Psoas muscle (tissue), 8 donors: ENCODE measurements at regions of chr22 and their contacts with region 1.

Region 1: GRCh38 chr22:45268958-45269844 is 15.5 kb upstream of the UPK3A start:
- DNase-seq: peak; percentile 85 to 95
- ATAC-seq: peak; percentile 79 to 87 (median 83)
- H3K4me3 ChIP-seq: peak overlapping the region; percentile 74
- H3K27ac ChIP-seq: peak overlapping the region; percentile 68
- H3K4me1 ChIP-seq: peaks cover 31% of the 10 kb centered on the region
- H3K27me3 ChIP-seq: no peaks in the 10 kb centered on the region
- CTCF ChIP-seq: peak; percentile 96

Region 2: DNA sequence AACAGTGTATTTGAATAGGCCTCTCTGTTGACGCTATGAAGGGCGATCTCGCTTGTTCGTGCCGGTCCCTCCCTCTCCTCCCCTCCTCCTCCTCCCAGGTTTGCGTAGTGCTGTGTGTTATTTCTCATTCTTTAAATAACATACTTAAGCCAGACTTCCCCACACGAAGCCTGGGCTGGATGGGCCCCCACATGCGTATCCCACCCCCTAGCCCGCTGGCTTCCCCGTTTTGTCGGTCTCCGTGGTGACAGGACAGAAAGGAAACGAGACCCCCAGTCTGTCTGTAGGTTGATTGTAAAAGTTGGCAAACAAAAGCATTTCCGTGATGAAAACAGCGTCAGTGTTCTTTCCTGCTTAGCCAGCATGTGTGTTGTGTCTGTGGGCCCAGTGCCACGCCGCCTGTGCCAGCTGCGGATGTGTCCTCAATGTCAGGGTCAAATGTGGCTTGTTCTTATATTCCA is 67.8 kb after region 1 on chr22:
- intact Hi-C with region 1: loop called in 1 of 2 experiments (anchors 2 kb)
- DNase-seq: peak; percentile 79 to 88
- ATAC-seq: peak; percentile 27 to 62 (median 54)
- H3K4me3 ChIP-seq: no peak overlapping the region
- H3K27ac ChIP-seq: peak overlapping the region; percentile 89
- H3K4me1 ChIP-seq: peaks cover 47% of the 10 kb centered on the region
- H3K27me3 ChIP-seq: no peaks in the 10 kb centered on the region
- CTCF ChIP-seq: no peak

Region 3: GRCh38 chr22:45435544-45436139 is 166.4 kb after region 1 on chr22:
- intact Hi-C with region 1: loop called (anchors 1 to 2 kb)
- DNase-seq: peak; percentile 87 to 91
- ATAC-seq: peak; percentile 93 to 99 (median 96)
- H3K4me3 ChIP-seq: peak overlapping the region; percentile 33
- H3K27ac ChIP-seq: no peak overlapping the region
- H3K4me1 ChIP-seq: no peaks in the 10 kb centered on the region
- H3K27me3 ChIP-seq: no peaks in the 10 kb centered on the region
- CTCF ChIP-seq: peak; percentile 97

Region 4: DNA sequence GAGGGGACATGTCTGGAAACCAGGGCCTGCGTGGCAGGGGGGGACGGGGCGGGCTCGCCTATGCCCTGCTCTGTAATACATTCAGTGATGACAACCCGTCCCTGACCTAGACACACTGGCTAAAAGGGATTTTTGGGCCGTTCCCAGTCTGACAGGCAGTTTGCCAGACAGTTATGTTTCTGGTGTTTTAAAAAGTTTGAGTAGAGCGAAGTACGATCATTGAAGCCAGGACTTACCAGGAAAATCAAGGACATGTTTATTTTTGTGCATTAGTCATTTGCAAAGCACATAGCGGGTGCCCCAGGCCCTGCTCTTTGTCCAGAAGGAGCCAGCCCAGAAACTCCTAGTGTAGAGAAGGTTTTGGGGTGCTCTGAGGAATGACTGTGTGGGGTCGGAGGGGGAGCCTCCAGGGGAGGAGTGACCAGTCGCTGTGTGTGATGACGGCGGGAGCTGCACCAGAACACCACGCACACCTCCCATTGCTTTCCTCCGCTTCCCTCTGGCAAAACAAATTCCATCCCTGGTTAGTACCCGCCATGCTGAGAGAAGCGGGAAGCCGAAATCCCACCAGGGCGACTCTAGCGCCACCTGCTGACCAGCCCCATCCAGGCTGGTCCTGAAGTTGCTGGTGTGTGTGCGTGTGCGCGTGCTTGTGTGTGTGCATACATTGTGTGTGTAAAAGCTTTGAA is 284.3 kb after region 1 on chr22:
- intact Hi-C with region 1: loop called (anchors 2 to 5 kb)
- DNase-seq: peak; percentile 76 to 86
- ATAC-seq: peak; percentile 64 to 85 (median 79)
- H3K4me3 ChIP-seq: no peak overlapping the region
- H3K27ac ChIP-seq: peak overlapping the region; percentile 36
- H3K4me1 ChIP-seq: peaks cover 3% of the 10 kb centered on the region
- H3K27me3 ChIP-seq: no peaks in the 10 kb centered on the region
- CTCF ChIP-seq: peak; percentile 91